PC-9 (cell line): ENCODE measurements at regions of chr11 and their contacts with region 1.

Region 1: DNA sequence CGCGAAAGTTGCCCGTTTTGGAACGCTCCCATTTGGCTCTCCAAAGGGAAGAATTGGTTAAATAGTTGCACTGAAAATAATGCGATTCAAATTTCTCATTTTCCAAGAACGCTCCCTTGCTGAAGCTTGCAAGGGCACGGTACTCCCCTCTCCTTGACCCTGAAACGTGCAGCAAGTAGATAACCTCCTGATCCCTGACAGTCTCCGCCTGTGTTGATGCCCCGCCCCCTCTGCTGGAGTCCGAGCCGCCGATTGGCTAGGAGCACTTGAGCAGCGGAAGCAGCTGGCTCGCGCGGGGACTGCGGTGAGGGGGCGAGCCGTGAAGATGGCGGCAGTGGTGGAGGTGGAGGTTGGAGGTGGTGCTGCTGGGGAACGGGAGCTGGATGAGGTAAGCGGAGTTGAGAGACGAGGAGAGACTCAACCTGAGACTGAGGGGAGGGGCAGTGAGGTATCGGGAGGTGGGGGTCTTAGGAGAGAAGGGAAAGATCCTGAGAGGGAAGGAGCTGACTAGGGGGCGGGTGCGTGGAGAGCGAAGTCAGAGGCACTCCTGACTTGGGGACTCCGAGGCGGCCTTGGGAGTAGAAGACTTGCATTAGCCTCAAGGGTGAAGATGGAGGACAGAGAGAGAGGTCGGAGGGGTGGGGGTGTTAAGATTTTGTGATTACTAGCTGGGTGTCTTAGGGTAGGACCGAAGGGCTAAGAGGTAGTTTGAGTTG is at the start of gene RNF121:
- DNase-seq: peak; percentile 93 to 95
- H3K4me3 ChIP-seq: peak within 1 kb of the TSS; percentile 89
- H3K27ac ChIP-seq: peak within 1 kb of the TSS; percentile 79
- H3K4me1 ChIP-seq: peaks cover 18% of the 10 kb centered on the region
- H3K27me3 ChIP-seq: no peaks in the 10 kb centered on the region
- CTCF ChIP-seq: no peak
- total RNA-seq, gene RNF121: 40.5 and 41.2 TPM in 2 replicates

Region 2: GRCh38 chr11:71991494-71991893 is 62.6 kb after region 1 on chr11:
- CTCF ChIA-PET with region 1: no interaction called
- POLR2A ChIA-PET with region 1: interaction called, 12 read pairs
- intact Hi-C with region 1: no loop called
- DNase-seq: no peak
- H3K4me3 ChIP-seq: no peak overlapping the region
- H3K27ac ChIP-seq: no peak overlapping the region
- H3K4me1 ChIP-seq: no peaks in the 10 kb centered on the region
- H3K27me3 ChIP-seq: no peaks in the 10 kb centered on the region
- CTCF ChIP-seq: no peak